ENCODE measurements at regions of chr6 and their contacts with region 1.

Region 1: GRCh38 chr6:72616406-72617015 is 5.4 kb upstream of the KCNQ5 start:
- DNase-seq: peak; percentile 66
- H3K4me3 ChIP-seq: no peak overlapping the region
- H3K27ac ChIP-seq: no peak overlapping the region
- H3K4me1 ChIP-seq: peaks cover 25% of the 10 kb centered on the region
- CTCF ChIP-seq: peak; percentile 95

Region 2: GRCh38 chr6:72132427-72132826 is 484.1 kb before region 1 on chr6:
- CTCF ChIA-PET with region 1: no interaction called
- POLR2A ChIA-PET with region 1: no interaction called
- intact Hi-C with region 1: no loop called
- DNase-seq: no peak
- H3K4me3 ChIP-seq: no peak overlapping the region
- H3K27ac ChIP-seq: no peak overlapping the region
- H3K4me1 ChIP-seq: no peaks in the 10 kb centered on the region
- CTCF ChIP-seq: no peak

Region 3: GRCh38 chr6:72861935-72862432 is 245.5 kb after region 1 on chr6:
- CTCF ChIA-PET with region 1: no interaction called
- POLR2A ChIA-PET with region 1: no interaction called
- intact Hi-C with region 1: no loop called
- DNase-seq: no peak
- H3K4me3 ChIP-seq: no peak overlapping the region
- H3K27ac ChIP-seq: no peak overlapping the region
- H3K4me1 ChIP-seq: no peaks in the 10 kb centered on the region
- CTCF ChIP-seq: no peak

Region 4: GRCh38 chr6:73129653-73130443 is 513.3 kb after region 1 on chr6:
- CTCF ChIA-PET with region 1: no interaction called
- POLR2A ChIA-PET with region 1: interaction called, 9 read pairs
- intact Hi-C with region 1: loop called (anchors 1 kb)
- DNase-seq: peak; percentile 44
- H3K4me3 ChIP-seq: no peak overlapping the region
- H3K27ac ChIP-seq: no peak overlapping the region
- H3K4me1 ChIP-seq: no peaks in the 10 kb centered on the region
- CTCF ChIP-seq: peak; percentile 92

Measured in OCI-LY7 (cell line).